ENCODE measurements at regions of chr20 and their contacts with region 1.

Region 1: GRCh38 chr20:20150241-20150640 is 97.9 kb downstream of the CFAP61 start:
- DNase-seq: no peak
- ATAC-seq: peak in 1 of 4 donors; percentile 29
- H3K4me3 ChIP-seq: no peak overlapping the region
- H3K27ac ChIP-seq: no peak overlapping the region
- H3K4me1 ChIP-seq: peaks cover 0 to 3% (median 0%) of the 10 kb centered on the region in 12 donors
- H3K27me3 ChIP-seq: no peaks in the 10 kb centered on the region
- CTCF ChIP-seq: no peak
- POLR2A ChIP-seq: no peak

Region 2: GRCh38 chr20:20083807-20084206 is 66.4 kb before region 1 on chr20:
- intact Hi-C with region 1: no loop called
- DNase-seq: no peak
- ATAC-seq: peak in 3 of 4 donors; percentile 7 to 31 (median 29)
- H3K4me3 ChIP-seq: peak overlapping the region in 1 of 12 donors; percentile 11
- H3K27ac ChIP-seq: peak overlapping the region in 11 of 12 donors; percentile 70 to 98 (median 86)
- H3K4me1 ChIP-seq: peaks cover 0 to 12% (median 5%) of the 10 kb centered on the region in 12 donors
- H3K27me3 ChIP-seq: peaks cover 0 to 4% (median 0%) of the 10 kb centered on the region in 9 donors
- CTCF ChIP-seq: peak; percentile 26 to 67 (median 52)
- POLR2A ChIP-seq: no peak

Region 3: GRCh38 chr20:20102716-20103258 is 47.5 kb before region 1 on chr20:
- intact Hi-C with region 1: loop called in 1 of 10 experiments (anchors 5 kb)
- DNase-seq: peak in 1 of 5 donors; percentile 40
- ATAC-seq: peak; percentile 79 to 92 (median 86)
- H3K4me3 ChIP-seq: no peak overlapping the region
- H3K27ac ChIP-seq: peak overlapping the region in 10 of 12 donors; percentile 27 to 90 (median 60)
- H3K4me1 ChIP-seq: peaks cover 0 to 13% (median 2%) of the 10 kb centered on the region in 12 donors
- H3K27me3 ChIP-seq: no peaks in the 10 kb centered on the region
- CTCF ChIP-seq: no peak
- POLR2A ChIP-seq: no peak

Measured in heart left ventricle (tissue), 16 donors.